ENCODE measurements at regions of chr1 and their contacts with region 1.

Region 1: GRCh38 chr1:198575798-198576641 is 35.5 kb upstream of the ATP6V1G3 start:
- DNase-seq: no peak
- ATAC-seq: peak; percentile 65
- H3K4me3 ChIP-seq: no peak overlapping the region
- H3K27ac ChIP-seq: no peak overlapping the region
- H3K4me1 ChIP-seq: peaks cover 12% of the 10 kb centered on the region
- H3K27me3 ChIP-seq: no peaks in the 10 kb centered on the region
- CTCF ChIP-seq: no peak
- EP300 ChIP-seq: 0 out of 4 replicates have a peak, but pooled peaks of 1 of the 2 experiments have one; percentile 14
- POLR2A ChIP-seq: no peak
- RAD21 ChIP-seq: no peak

Region 2: DNA sequence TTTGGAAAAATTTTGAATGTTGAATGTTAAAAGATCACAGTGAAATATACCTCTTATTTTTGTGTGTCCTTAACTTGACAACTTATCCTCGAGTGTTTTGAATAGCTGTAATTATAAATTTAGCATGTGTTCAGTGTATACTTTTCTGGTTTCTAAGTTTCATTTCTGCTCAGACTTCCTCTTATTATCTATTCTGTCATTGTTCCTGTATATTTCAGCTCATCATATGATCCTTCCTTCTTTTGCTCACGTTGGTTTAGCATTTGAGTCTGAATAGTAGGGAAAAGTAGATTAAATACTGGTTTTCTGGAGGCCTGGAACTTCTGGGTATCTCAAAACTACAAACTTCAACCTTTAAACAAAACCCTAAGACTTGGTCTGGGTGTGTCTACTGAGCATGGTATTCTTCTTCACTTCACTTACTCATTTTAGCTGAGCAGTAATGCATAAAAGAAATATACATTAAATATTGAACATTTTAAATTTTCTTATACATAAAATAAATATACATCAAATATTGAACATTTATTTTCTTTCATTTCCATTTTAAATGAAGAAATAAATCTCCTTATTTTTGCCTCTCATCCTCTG is 32.3 kb before region 1 on chr1:
- CTCF ChIA-PET with region 1: no interaction called
- POLR2A ChIA-PET with region 1: interaction called, 3 read pairs
- RAD21 ChIA-PET with region 1: interaction called, 3 read pairs
- SMC1A ChIA-PET with region 1: interaction called, 11 read pairs
- in situ Hi-C with region 1: no loop called
- intact Hi-C with region 1: no loop called
- DNase-seq: no peak
- ATAC-seq: peak; percentile 94
- H3K4me3 ChIP-seq: no peak overlapping the region
- H3K27ac ChIP-seq: no peak overlapping the region
- H3K4me1 ChIP-seq: peaks cover 9% of the 10 kb centered on the region
- H3K27me3 ChIP-seq: no peaks in the 10 kb centered on the region
- CTCF ChIP-seq: no peak
- EP300 ChIP-seq: peak in 1 of 2 experiments; percentile 57; a peak in 2 of 4 replicates
- POLR2A ChIP-seq: no peak
- RAD21 ChIP-seq: no peak

Region 3: DNA sequence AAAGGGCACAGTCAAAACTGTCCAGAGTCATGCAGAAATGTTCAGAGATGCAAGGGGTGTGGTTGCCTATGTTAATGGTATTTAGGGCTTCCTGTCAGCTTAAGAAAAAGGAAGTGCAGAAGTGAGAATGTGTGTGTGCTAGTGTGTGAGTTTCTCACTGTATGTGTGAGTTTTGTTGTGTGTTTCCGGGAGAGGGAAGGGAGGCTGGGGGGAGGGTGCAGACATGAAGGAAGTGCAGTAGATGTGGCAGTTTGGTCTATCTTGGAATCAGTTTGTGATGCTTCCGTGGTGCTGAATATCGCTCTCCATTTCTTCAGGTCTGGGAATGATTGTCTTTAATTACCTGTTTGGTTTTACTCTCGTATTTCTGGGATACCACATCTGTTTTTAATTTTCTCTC is 19.0 kb before region 1 on chr1:
- CTCF ChIA-PET with region 1: interaction called, 4 read pairs
- POLR2A ChIA-PET with region 1: interaction called, 3 read pairs
- RAD21 ChIA-PET with region 1: no interaction called
- SMC1A ChIA-PET with region 1: interaction called, 18 read pairs
- in situ Hi-C with region 1: no loop called
- intact Hi-C with region 1: no loop called
- DNase-seq: peak; percentile 71
- ATAC-seq: peak; percentile 95
- H3K4me3 ChIP-seq: no peak overlapping the region
- H3K27ac ChIP-seq: no peak overlapping the region; the same call in 1 of the 2 replicates
- H3K4me1 ChIP-seq: peaks cover 4% of the 10 kb centered on the region; the same call in 1 of the 2 replicates
- H3K27me3 ChIP-seq: no peaks in the 10 kb centered on the region
- CTCF ChIP-seq: no peak
- EP300 ChIP-seq: 0 out of 4 replicates have a peak, but pooled peaks of 1 of the 2 experiments have one; percentile 43
- POLR2A ChIP-seq: no peak
- RAD21 ChIP-seq: 0 out of 2 replicates have a peak, but pooled peaks have one; percentile 13

Region 4: DNA sequence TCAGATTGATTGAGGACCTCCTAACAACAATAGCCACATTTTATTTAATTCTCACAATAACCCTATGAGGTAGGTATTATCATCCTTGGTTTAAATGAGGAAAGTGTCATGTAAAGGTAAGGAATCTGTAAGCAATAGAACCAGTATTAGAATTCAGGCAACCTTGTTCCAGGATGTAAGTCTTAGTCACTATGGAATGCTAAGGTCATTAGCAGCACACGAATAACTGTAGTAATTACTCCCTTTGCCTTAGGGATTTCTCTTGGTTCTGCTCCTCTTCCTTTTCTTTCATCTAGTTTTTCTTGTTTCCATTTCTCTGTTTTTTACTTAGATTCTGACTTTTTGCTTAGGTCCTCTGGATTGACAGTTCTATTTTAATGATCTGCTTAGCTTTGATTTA is 12.4 kb before region 1 on chr1:
- CTCF ChIA-PET with region 1: interaction called, 6 read pairs
- POLR2A ChIA-PET with region 1: no interaction called
- RAD21 ChIA-PET with region 1: no interaction called
- SMC1A ChIA-PET with region 1: interaction called, 18 read pairs
- in situ Hi-C with region 1: no loop called
- intact Hi-C with region 1: no loop called
- DNase-seq: no peak
- ATAC-seq: no peak
- H3K4me3 ChIP-seq: no peak overlapping the region
- H3K27ac ChIP-seq: no peak overlapping the region
- H3K4me1 ChIP-seq: no peaks in the 10 kb centered on the region
- H3K27me3 ChIP-seq: no peaks in the 10 kb centered on the region
- CTCF ChIP-seq: no peak
- EP300 ChIP-seq: no peak
- POLR2A ChIP-seq: no peak
- RAD21 ChIP-seq: no peak

Region 5: GRCh38 chr1:198741744-198742143 is 165.7 kb after region 1 on chr1:
- CTCF ChIA-PET with region 1: no interaction called
- POLR2A ChIA-PET with region 1: no interaction called
- RAD21 ChIA-PET with region 1: no interaction called
- SMC1A ChIA-PET with region 1: no interaction called
- in situ Hi-C with region 1: no loop called
- intact Hi-C with region 1: no loop called
- DNase-seq: no peak
- ATAC-seq: no peak
- H3K4me3 ChIP-seq: no peak overlapping the region
- H3K27ac ChIP-seq: no peak overlapping the region
- H3K4me1 ChIP-seq: no peaks in the 10 kb centered on the region
- H3K27me3 ChIP-seq: no peaks in the 10 kb centered on the region
- CTCF ChIP-seq: no peak
- EP300 ChIP-seq: no peak
- POLR2A ChIP-seq: no peak
- RAD21 ChIP-seq: no peak